Stomach (tissue), 19 donors: ENCODE measurements at regions of chr1 and their contacts with region 1.

Region 1: GRCh38 chr1:26321315-26322041 is 3.7 kb downstream of the CD52 start:
- DNase-seq: peak; percentile 94 to 97
- H3K4me3 ChIP-seq: no peak overlapping the region
- H3K27ac ChIP-seq: no peak overlapping the region
- H3K4me1 ChIP-seq: peaks cover 0 to 25% (median 10%) of the 10 kb centered on the region in 4 donors
- H3K27me3 ChIP-seq: peaks cover 0 to 14% (median 0%) of the 10 kb centered on the region in 3 donors
- CTCF ChIP-seq: peak in 5 of 7 experiments; percentile 77 to 91 (median 90)
- EP300 ChIP-seq: no peak
- POLR2A ChIP-seq: no peak

Region 2: GRCh38 chr1:26274801-26275425 is 46.6 kb before region 1 on chr1:
- intact Hi-C with region 1: loop called (anchors 5 kb)
- DNase-seq: peak in 1 of 2 donors; percentile 19
- H3K4me3 ChIP-seq: no peak overlapping the region
- H3K27ac ChIP-seq: peak overlapping the region in 4 of 5 donors; percentile 93 to 100 (median 98)
- H3K4me1 ChIP-seq: peaks cover 42 to 46% (median 44%) of the 10 kb centered on the region in 4 donors
- H3K27me3 ChIP-seq: no peaks in the 10 kb centered on the region
- CTCF ChIP-seq: no peak
- EP300 ChIP-seq: no peak
- POLR2A ChIP-seq: no peak

Region 3: GRCh38 chr1:26284597-26285360 is 36.7 kb before region 1 on chr1:
- intact Hi-C with region 1: loop called (anchors 5 kb)
- DNase-seq: peak; percentile 82 to 92
- H3K4me3 ChIP-seq: no peak overlapping the region
- H3K27ac ChIP-seq: peak overlapping the region; percentile 2 to 100 (median 71)
- H3K4me1 ChIP-seq: peaks cover 45 to 96% (median 62%) of the 10 kb centered on the region in 4 donors
- H3K27me3 ChIP-seq: no peaks in the 10 kb centered on the region
- CTCF ChIP-seq: peak in 5 of 7 experiments; percentile 44 to 71 (median 60)
- EP300 ChIP-seq: no peak
- POLR2A ChIP-seq: no peak

Region 4: DNA sequence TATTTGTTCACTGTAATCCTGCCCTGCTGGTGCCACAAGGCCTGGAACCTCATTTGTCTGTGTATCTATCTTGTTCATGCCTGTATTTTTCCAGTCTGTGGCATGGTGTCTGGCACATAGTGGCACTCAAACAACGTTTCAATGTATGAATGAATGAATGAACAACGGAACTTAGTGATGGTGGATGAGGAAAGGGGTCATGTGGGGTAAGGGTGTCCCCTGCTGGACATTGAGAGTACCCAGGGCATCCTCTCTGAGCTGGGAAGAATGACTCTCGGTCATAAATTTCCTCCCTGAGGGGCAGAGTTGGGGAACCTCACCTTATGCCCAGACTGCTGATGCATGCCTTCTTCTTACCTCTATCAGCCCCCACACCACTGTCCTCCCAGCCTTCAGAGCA is 70.0 kb after region 1 on chr1:
- intact Hi-C with region 1: no loop called
- DNase-seq: peak in 1 of 2 donors; percentile 46
- H3K4me3 ChIP-seq: no peak overlapping the region
- H3K27ac ChIP-seq: no peak overlapping the region
- H3K4me1 ChIP-seq: no peaks in the 10 kb centered on the region
- H3K27me3 ChIP-seq: peaks cover 0 to 32% (median 0%) of the 10 kb centered on the region in 3 donors
- CTCF ChIP-seq: peak in 1 of 7 experiments; percentile 7
- EP300 ChIP-seq: no peak
- POLR2A ChIP-seq: no peak